ENCODE measurements at regions of chr14 and their contacts with region 1.

Region 1: DNA sequence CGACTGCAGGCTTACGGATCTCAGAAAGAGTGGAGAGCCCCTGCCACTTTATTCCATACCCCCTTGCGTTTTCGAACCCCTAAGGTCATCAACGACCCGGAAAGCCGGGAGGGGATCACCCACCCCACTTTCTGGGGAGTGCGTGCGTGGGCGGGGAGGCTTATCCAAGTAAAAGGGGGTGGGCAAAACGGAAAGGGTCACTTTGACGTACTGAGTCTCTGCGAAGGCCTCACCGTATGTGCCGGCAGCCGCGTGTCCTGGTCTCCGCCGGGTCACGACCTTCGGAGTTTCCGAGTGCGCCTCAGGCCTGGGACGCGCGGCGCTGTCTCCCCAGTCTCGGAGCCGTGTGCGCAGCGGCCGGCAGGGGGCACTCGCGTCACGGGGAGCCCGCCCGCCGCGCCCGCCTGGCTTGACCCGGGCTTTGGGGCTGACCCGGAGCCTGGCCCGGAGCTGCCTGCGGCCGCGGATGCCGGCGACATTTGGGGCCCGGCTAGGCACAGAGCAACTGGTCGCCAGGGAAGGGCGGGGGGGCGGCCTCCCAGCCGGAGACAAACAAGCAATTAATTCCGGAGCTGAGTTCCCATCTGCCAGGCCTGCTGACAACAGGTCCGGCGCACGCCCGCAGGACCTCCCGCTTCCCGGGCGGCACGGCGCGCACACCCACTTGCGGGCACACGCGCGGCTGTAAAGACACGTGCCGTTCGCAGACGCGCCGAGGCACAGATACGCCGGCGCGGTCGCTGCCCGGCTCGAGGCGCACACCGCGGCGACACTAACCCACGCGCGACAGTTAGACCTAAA is 890 bp upstream of the KIF26A start:
- DNase-seq: peak in 1 of 2 experiments; percentile 85
- H3K4me3 ChIP-seq: peak overlapping the region; percentile 53
- H3K4me3 Mint-ChIP-seq: peak overlapping the region; percentile 47
- H3K27ac Mint-ChIP-seq: no peak overlapping the region
- H3K4me1 ChIP-seq: peaks cover 15% of the 10 kb centered on the region
- H3K4me1 Mint-ChIP-seq: no peaks in the 10 kb centered on the region
- H3K27me3 ChIP-seq: peaks cover 5% of the 10 kb centered on the region; the same call in 1 of the 2 replicates
- H3K27me3 Mint-ChIP-seq: peaks cover 12% of the 10 kb centered on the region
- CTCF ChIP-seq: peak; percentile 65 to 89

Region 2: GRCh38 chr14:104150136-104151027 is 12.9 kb after region 1 on chr14:
- CTCF ChIA-PET with region 1: no interaction called
- POLR2A ChIA-PET with region 1: no interaction called
- intact Hi-C with region 1: no loop called
- DNase-seq: no peak
- H3K4me3 ChIP-seq: no peak overlapping the region
- H3K4me3 Mint-ChIP-seq: no peak overlapping the region
- H3K27ac Mint-ChIP-seq: no peak overlapping the region
- H3K4me1 ChIP-seq: no peaks in the 10 kb centered on the region
- H3K4me1 Mint-ChIP-seq: no peaks in the 10 kb centered on the region
- H3K27me3 ChIP-seq: no peaks in the 10 kb centered on the region
- H3K27me3 Mint-ChIP-seq: peaks cover 5% of the 10 kb centered on the region
- CTCF ChIP-seq: no peak

Region 3: DNA sequence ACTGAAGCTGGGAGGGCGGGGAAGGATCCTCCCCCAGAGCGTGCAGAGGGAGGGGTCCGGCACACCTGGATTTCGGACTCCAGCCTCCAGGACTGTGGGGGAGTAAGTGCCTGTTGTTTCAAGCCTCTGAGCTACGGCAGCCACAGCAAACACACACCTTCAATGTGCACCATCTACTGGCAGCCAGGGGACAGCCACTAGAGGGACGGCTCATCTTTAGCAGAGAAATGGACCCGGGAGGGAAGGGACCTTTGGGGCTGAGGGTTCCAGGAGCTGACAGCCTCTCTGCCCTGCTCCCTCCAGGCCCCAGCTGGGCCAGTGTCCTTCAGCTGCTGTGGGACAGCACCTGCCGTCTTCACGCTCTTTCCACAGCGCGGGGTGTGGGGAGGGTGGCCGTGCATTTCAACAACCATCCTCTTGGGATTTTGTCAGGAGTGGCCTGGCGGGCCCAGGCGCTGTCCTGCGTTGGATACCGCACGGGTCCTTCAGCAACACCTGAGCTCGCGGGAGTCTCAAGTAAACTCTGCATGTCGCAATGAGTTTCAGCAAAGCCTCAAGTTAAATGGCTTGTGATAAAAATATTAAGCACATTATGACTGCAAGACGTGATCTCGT is 232.9 kb after region 1 on chr14:
- CTCF ChIA-PET with region 1: interaction called, 3 read pairs
- POLR2A ChIA-PET with region 1: no interaction called
- intact Hi-C with region 1: loop called (anchors 2 kb)
- DNase-seq: peak; percentile 44 to 58
- H3K4me3 ChIP-seq: no peak overlapping the region
- H3K4me3 Mint-ChIP-seq: no peak overlapping the region
- H3K27ac Mint-ChIP-seq: no peak overlapping the region
- H3K4me1 ChIP-seq: no peaks in the 10 kb centered on the region
- H3K4me1 Mint-ChIP-seq: no peaks in the 10 kb centered on the region
- H3K27me3 ChIP-seq: no peaks in the 10 kb centered on the region
- H3K27me3 Mint-ChIP-seq: peaks cover 23% of the 10 kb centered on the region
- CTCF ChIP-seq: peak; percentile 22 to 75

Region 4: GRCh38 chr14:104563742-104564615 is 426.5 kb after region 1 on chr14:
- CTCF ChIA-PET with region 1: interaction called, 9 read pairs
- POLR2A ChIA-PET with region 1: no interaction called
- intact Hi-C with region 1: loop called (anchors 2 kb)
- DNase-seq: peak; percentile 79 to 85
- H3K4me3 ChIP-seq: no peak overlapping the region
- H3K4me3 Mint-ChIP-seq: no peak overlapping the region
- H3K27ac Mint-ChIP-seq: no peak overlapping the region
- H3K4me1 ChIP-seq: peaks cover 3% of the 10 kb centered on the region
- H3K4me1 Mint-ChIP-seq: no peaks in the 10 kb centered on the region
- H3K27me3 ChIP-seq: 0 out of 2 replicates have a peak, but pooled peaks cover 1% of the 10 kb centered on the region
- H3K27me3 Mint-ChIP-seq: peaks cover 17% of the 10 kb centered on the region
- CTCF ChIP-seq: peak; percentile 68 to 83

Region 5: GRCh38 chr14:104639889-104640548 is 502.5 kb after region 1 on chr14:
- CTCF ChIA-PET with region 1: no interaction called
- POLR2A ChIA-PET with region 1: no interaction called
- intact Hi-C with region 1: loop called (anchors 1 kb)
- DNase-seq: peak; percentile 67 to 81
- H3K4me3 ChIP-seq: no peak overlapping the region
- H3K4me3 Mint-ChIP-seq: no peak overlapping the region
- H3K27ac Mint-ChIP-seq: no peak overlapping the region
- H3K4me1 ChIP-seq: peaks cover 7% of the 10 kb centered on the region
- H3K4me1 Mint-ChIP-seq: peaks cover 14% of the 10 kb centered on the region
- H3K27me3 ChIP-seq: no peaks in the 10 kb centered on the region; the same call in 1 of the 2 replicates
- H3K27me3 Mint-ChIP-seq: peaks cover 20% of the 10 kb centered on the region
- CTCF ChIP-seq: peak; percentile 90 to 92

Measured in Caco-2 (cell line).